Dorsolateral prefrontal cortex (tissue), 120 donors: ENCODE measurements at regions of chr15 and their contacts with region 1.

Region 1: GRCh38 chr15:51649659-51650521 is 27.3 kb upstream of the DMXL2 start:
- DNase-seq: peak in 2 of 10 donors; percentile 44 to 53
- H3K4me3 ChIP-seq: no peak overlapping the region
- H3K27ac ChIP-seq: no peak overlapping the region
- H3K27me3 ChIP-seq: no peaks in the 10 kb centered on the region
- CTCF ChIP-seq: peak; percentile 71 to 97 (median 86)

Region 2: DNA sequence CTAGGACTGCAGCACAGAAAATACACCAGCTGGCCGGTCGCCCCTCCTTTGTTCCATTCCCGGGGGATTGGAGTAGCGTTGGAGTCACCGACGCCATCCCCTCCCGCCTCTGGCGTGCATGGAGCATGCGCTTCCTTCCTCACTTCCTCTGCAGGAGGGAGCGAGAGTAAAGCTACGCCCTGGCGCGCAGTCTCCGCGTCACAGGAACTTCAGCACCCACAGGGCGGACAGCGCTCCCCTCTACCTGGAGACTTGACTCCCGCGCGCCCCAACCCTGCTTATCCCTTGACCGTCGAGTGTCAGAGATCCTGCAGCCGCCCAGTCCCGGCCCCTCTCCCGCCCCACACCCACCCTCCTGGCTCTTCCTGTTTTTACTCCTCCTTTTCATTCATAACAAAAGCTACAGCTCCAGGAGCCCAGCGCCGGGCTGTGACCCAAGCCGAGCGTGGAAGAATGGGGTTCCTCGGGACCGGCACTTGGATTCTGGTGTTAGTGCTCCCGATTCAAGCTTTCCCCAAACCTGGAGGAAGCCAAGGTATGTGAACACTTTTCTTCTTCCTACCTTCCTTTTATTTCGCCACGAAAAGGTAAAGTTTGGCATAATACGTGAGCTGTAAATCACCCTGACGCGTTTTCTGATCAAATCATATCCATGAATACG is 31.5 kb after region 1 on chr15 and contains the start of gene SCG3:
- intact Hi-C with region 1: no loop called
- DNase-seq: peak; percentile 65 to 92 (median 87)
- H3K4me3 ChIP-seq: peak within 1 kb of the TSS; percentile 13 to 75 (median 62)
- H3K27ac ChIP-seq: peak within 1 kb of the TSS in 58 of 59 donors; percentile 1 to 93 (median 82)
- H3K27me3 ChIP-seq: no peaks in the 10 kb centered on the region
- CTCF ChIP-seq: peak in 7 of 56 donors; percentile 10 to 28 (median 16)
- total RNA-seq, gene SCG3: 40.1 to 220 (median 136) TPM

Region 3: DNA sequence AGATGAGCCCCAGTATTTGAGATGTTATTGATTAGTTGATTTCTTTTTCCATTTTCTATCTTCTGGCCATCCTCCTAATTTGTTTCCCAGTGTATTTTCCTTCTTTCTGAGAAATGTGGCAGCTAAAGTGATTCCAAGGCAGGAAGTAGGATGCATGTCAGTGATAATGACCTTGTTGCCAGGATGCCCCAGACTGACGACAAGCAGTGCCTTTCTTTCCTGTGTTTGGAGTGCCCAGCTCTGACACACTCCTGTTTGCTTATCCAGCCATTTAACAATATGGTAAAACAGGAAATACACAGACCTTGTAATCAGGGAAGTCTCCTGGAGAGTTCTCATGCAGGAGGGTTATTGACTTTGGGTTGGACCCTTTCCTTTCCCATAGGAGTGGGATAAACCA is 121.9 kb after region 1 on chr15:
- intact Hi-C with region 1: loop called (anchors 2 to 5 kb)
- DNase-seq: no peak
- H3K4me3 ChIP-seq: no peak overlapping the region
- H3K27ac ChIP-seq: peak overlapping the region in 27 of 59 donors; percentile 2 to 65 (median 33)
- H3K27me3 ChIP-seq: no peaks in the 10 kb centered on the region
- CTCF ChIP-seq: no peak

Region 4: GRCh38 chr15:51776952-51777574 is 127.2 kb after region 1 on chr15:
- intact Hi-C with region 1: loop called (anchors 2 to 5 kb)
- DNase-seq: peak in 7 of 10 donors; percentile 59 to 84 (median 64)
- H3K4me3 ChIP-seq: no peak overlapping the region
- H3K27ac ChIP-seq: peak overlapping the region in 15 of 59 donors; percentile 3 to 76 (median 43)
- H3K27me3 ChIP-seq: no peaks in the 10 kb centered on the region
- CTCF ChIP-seq: peak; percentile 66 to 92 (median 86)